ENCODE measurements at regions of chr15 and their contacts with region 1.

Region 1: GRCh38 chr15:74937596-74938296 is at the start of gene COX5A:
- DNase-seq: peak; percentile 88 to 96 (median 93)
- H3K4me3 ChIP-seq: peak within 1 kb of the TSS; percentile 59 to 100 (median 96)
- H3K27ac ChIP-seq: peak within 1 kb of the TSS; percentile 68 to 99 (median 95)
- H3K27me3 ChIP-seq: no peaks in the 10 kb centered on the region
- CTCF ChIP-seq: peak in 29 of 56 donors; percentile 7 to 64 (median 30)
- total RNA-seq, gene COX5A: 113 to 311 (median 236) TPM

Region 2: GRCh38 chr15:74781431-74782258 is 156.1 kb before region 1 on chr15 and contains the start of gene CSK:
- intact Hi-C with region 1: loop called in 1 of 2 experiments (anchors 5 kb)
- DNase-seq: peak in 5 of 10 donors; percentile 43 to 84 (median 46)
- H3K4me3 ChIP-seq: peak within 1 kb of the TSS; percentile 60 to 88 (median 73)
- H3K27ac ChIP-seq: peak within 1 kb of the TSS in 56 of 59 donors; percentile 15 to 89 (median 74)
- H3K27me3 ChIP-seq: no peaks in the 10 kb centered on the region
- CTCF ChIP-seq: peak in 55 of 56 donors; percentile 41 to 78 (median 62)
- total RNA-seq, gene CSK: 28.9 to 71.0 (median 41.8) TPM

Region 3: DNA sequence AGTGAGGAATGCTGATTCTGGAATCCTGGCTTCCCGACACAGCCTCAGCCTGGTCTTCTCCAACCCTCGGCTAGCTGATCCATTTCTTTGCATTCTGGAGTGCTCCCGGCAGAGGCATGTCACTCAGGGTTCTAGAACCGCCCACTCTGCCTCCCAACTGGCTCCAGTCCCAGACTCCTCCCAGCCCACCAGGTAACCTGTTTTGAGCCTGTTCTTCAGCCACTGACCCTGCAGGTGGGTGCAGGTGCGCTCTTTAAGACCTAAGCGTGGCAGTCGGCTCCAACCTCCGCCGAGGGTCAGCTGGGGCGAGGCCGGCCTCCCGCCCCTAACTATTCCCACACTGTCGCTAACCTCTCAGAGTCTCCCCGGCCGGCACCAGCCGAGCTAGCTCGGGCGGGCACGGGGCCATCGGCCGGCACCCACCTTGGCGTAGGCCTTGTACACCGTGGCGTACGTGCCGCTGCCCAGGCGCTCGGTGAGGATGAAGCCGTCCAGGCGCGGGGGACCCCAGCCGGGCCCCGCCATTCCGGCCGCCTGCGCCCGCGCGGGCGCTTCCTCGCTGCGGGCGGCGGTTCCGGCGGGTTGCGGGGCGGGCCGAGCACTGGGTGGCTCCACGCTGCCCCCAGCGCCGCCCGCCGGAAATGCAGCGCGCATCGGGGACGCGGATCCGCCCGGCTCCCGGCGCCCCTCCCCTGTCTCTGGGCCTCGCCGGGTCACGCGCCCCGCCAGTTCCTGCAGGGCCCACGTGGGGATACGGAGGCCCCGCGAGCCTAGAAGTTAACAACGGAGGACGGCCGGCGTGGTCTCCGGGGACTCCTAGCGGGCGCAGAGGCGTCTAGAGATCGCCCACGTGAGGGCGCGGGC is 94.9 kb before region 1 on chr15 and contains the start of gene ULK3:
- intact Hi-C with region 1: loop called in 1 of 2 experiments (anchors 5 kb)
- DNase-seq: peak; percentile 83 to 94 (median 92)
- H3K4me3 ChIP-seq: peak within 1 kb of the TSS; percentile 72 to 98 (median 93)
- H3K27ac ChIP-seq: peak within 1 kb of the TSS; percentile 66 to 97 (median 91)
- H3K27me3 ChIP-seq: no peaks in the 10 kb centered on the region
- CTCF ChIP-seq: peak in 55 of 56 donors; percentile 33 to 97 (median 72)
- total RNA-seq, gene ULK3: 55.0 to 133 (median 84.0) TPM

Region 4: GRCh38 chr15:74873036-74873755 is 64.5 kb before region 1 on chr15 and contains the start of gene SCAMP2:
- intact Hi-C with region 1: loop called in 1 of 2 experiments (anchors 10 kb)
- DNase-seq: peak; percentile 87 to 97 (median 96)
- H3K4me3 ChIP-seq: peak within 1 kb of the TSS; percentile 67 to 100 (median 87)
- H3K27ac ChIP-seq: peak within 1 kb of the TSS; percentile 26 to 96 (median 88)
- H3K27me3 ChIP-seq: no peaks in the 10 kb centered on the region
- CTCF ChIP-seq: peak in 32 of 56 donors; percentile 6 to 55 (median 24)
- total RNA-seq, gene SCAMP2: 19.5 to 74.6 (median 41.4) TPM

Region 5: DNA sequence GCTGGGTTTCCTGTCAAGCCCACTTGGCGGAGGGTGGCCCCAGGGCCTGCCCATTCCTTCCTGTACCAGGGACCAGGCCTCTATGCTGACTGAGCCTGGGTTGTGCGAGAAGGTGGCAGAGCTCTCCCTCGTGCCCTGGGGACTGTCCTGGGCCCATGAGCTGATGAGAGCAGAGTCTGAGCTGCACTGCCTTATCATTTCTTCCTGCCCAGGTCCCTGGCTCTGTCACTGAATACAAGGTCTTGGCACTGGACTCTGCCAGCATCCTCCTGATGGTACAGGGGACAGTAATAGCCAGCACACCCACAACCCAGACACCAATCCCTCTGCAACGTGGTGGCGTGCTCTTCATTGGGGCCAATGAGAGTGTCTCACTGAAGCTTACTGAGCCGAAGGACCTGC is 40.4 kb before region 1 on chr15:
- intact Hi-C with region 1: loop called in 1 of 2 experiments (anchors 5 kb)
- DNase-seq: no peak
- H3K4me3 ChIP-seq: no peak overlapping the region
- H3K27ac ChIP-seq: peak overlapping the region in 22 of 59 donors; percentile 2 to 61 (median 38)
- H3K27me3 ChIP-seq: no peaks in the 10 kb centered on the region
- CTCF ChIP-seq: no peak

Region 6: GRCh38 chr15:74906446-74907162 is 31.1 kb before region 1 on chr15 and contains the start of gene FAM219B:
- intact Hi-C with region 1: loop called (anchors 1 to 2 kb)
- DNase-seq: peak; percentile 87 to 97 (median 93)
- H3K4me3 ChIP-seq: peak within 1 kb of the TSS; percentile 65 to 99 (median 95)
- H3K27ac ChIP-seq: peak within 1 kb of the TSS; percentile 63 to 97 (median 93)
- H3K27me3 ChIP-seq: no peaks in the 10 kb centered on the region
- CTCF ChIP-seq: peak in 30 of 56 donors; percentile 5 to 60 (median 28)
- total RNA-seq, gene FAM219B: 76.8 to 142 (median 107) TPM